ENCODE measurements at regions of chr16 and their contacts with region 1.

Region 1: GRCh38 chr16:31700526-31701388 is 172.8 kb upstream of the ZNF267 start:
- DNase-seq: peak in 1 of 2 experiments; percentile 93
- H3K4me3 ChIP-seq: peak overlapping the region; percentile 81 to 96 (median 90)
- H3K27ac ChIP-seq: peak overlapping the region; percentile 19; the same call in 1 of the 2 replicates
- H3K4me1 ChIP-seq: 0 out of 7 replicates have a peak, but pooled peaks cover 0 to 4% (median 0%) of the 10 kb centered on the region in 4 experiments
- H3K27me3 ChIP-seq: peaks cover 0 to 3% (median 0%) of the 10 kb centered on the region in 4 experiments; a peak in 1 of 7 replicates
- CTCF ChIP-seq: peak in 1 of 3 experiments; percentile 5; a peak in 1 of 4 replicates
- EP300 ChIP-seq: no peak
- POLR2A ChIP-seq: peak in 1 of 2 experiments; percentile 78; a peak in 2 of 3 replicates
- RAD21 ChIP-seq: no peak

Region 2: DNA sequence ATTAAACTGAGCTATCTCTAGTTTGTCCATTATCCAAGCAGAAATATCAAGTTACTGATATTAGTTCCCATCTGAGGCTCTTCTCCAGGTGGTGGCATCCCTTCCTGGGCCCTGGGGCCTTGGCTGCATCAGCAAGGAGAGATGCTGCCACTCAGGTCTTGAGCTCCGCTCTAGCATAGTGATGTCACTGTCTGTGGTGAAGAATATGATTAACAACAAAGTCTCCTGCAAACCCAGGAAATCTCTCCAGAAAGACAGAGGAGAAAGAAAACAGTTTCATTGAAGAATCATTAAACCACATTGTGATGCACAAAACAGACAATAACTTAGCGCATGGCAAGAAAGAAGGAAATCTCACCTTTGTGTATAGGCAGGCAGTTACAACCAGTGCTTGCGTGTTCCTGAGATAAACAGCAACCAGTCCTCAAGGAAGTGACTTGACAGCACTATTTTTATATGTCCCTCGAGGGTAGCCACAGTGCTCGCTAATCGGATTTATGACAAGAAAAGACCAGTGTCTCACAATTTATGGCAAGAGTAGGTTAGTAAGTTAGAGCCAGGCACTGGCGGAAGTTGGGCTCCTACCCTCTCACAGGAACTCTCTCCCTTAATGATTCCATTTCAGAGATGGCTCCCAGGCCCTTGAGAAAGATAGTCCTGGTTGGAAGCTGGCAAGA is 22.0 kb before region 1 on chr16:
- CTCF ChIA-PET with region 1: no interaction called
- POLR2A ChIA-PET with region 1: no interaction called
- DNase-seq: no peak
- H3K4me3 ChIP-seq: no peak overlapping the region
- H3K27ac ChIP-seq: no peak overlapping the region
- H3K4me1 ChIP-seq: no peaks in the 10 kb centered on the region
- H3K27me3 ChIP-seq: peaks cover 0 to 1% (median 0%) of the 10 kb centered on the region in 4 experiments; a peak in 1 of 7 replicates
- CTCF ChIP-seq: no peak
- EP300 ChIP-seq: no peak
- POLR2A ChIP-seq: no peak
- RAD21 ChIP-seq: no peak

Region 3: DNA sequence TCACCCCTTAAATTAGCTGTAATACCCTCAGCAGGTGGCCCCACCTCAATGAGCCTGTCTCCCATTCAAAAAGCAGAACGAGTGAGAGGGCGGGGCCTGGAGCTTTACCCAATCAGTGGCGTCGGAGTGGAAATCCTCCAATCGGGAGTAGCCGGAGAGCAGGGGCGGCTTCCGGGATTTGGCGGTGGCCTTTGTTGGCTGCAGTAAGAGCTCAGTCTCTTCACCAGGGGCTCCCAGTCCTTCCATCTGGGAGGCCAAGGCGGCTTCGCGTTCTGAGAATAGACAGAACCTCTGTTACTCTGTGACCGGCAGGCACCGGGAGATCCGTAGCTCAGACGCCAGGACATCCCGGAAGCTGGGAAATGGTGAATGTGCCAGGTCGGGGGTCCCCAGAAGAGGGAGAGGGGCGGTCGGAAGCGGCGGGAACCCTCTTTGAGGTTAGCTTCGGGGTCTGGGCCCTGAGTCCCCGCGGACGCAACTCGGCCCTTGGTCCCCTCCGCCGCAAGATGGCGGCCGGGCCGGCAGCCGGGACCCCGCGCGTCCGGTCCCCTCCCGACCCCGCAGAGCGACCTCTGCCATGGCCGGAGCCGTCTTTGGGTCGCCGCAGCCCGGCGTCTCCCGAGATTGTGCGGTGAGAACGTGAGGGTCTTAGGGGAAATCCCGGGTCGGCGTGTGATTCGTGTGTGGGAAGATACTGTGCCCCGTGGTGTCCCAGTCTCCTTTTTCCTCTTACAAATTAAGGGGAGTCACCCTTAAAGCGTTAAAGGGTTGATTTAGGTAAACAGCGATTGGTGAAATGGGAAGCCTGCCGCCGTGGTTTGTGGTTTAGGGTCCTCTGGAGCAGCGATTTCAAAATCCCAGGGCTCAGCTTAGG is 12.6 kb after region 1 on chr16:
- CTCF ChIA-PET with region 1: interaction called, 29 read pairs
- POLR2A ChIA-PET with region 1: interaction called, 43 read pairs
- DNase-seq: peak; percentile 88 to 93
- H3K4me3 ChIP-seq: peak overlapping the region; percentile 77 to 95 (median 92)
- H3K27ac ChIP-seq: peak overlapping the region; percentile 94
- H3K4me1 ChIP-seq: peaks cover 4 to 14% (median 5%) of the 10 kb centered on the region in 4 experiments; a peak in 6 of 7 replicates
- H3K27me3 ChIP-seq: no peaks in the 10 kb centered on the region
- CTCF ChIP-seq: no peak
- EP300 ChIP-seq: no peak
- POLR2A ChIP-seq: peak; percentile 94 to 96
- RAD21 ChIP-seq: no peak

Region 4: DNA sequence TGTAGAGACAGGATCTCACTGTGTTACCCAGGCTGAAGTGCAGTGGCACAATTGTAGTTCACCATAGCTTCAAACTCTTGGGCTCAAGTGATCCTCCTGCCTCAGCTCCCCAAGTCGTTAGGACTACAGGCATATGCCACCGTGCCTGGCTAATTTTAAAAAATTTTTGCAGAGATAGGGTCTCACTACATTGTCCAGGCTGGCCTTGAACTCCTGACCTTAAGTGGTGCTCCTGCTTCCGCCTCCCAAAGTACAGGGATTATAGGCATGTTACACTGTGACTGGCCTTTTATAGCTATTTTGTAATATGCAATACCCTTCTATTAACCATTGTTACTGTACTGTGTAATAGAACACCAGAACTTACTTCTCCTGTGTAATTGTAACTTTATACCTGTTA is 33.5 kb after region 1 on chr16:
- CTCF ChIA-PET with region 1: no interaction called
- POLR2A ChIA-PET with region 1: no interaction called
- DNase-seq: no peak
- H3K4me3 ChIP-seq: no peak overlapping the region
- H3K27ac ChIP-seq: no peak overlapping the region
- H3K4me1 ChIP-seq: no peaks in the 10 kb centered on the region
- H3K27me3 ChIP-seq: no peaks in the 10 kb centered on the region
- CTCF ChIP-seq: no peak
- EP300 ChIP-seq: no peak
- POLR2A ChIP-seq: no peak
- RAD21 ChIP-seq: no peak

Measured in H1 (cell line).